Adrenal gland (tissue), 19 donors: ENCODE measurements at regions of chr1 and their contacts with region 1.

Region 1: DNA sequence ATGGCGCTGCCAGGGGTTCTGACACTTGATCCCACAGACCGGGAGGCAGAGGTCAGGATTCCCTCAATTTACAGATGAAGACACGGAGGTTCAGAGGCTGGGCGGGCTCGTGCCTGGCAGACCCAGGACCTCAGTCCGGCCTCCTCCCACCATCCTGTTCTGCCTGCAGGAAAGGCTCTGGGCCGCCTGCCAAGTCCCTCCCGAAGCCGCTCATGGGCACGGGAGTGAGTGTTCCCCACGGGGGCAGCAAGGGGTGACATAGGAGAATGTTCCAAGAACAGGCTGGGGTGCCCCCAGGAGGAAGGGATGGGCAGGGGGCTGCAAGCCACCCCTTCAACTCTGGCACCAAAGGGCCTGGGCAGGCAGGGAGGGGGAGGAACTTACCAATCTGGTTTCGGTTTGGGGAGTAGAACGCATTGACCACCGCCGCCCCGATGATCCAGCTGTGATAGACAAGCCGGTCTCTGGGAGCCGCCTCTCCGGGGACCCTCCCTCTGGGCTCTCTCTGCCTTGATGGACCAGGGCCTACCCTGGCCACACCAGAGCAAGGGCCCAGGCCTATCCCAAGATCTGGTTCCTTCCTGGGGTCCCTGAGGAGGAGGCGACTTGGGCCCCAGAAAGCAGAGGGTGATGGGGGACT is 7.5 kb downstream of the PRXL2B start:
- DNase-seq: peak; percentile 14 to 77 (median 70)
- H3K4me3 ChIP-seq: peak overlapping the region in 1 of 4 donors; percentile 31
- H3K27ac ChIP-seq: no peak overlapping the region
- H3K4me1 ChIP-seq: peaks cover 5 to 13% of the 10 kb centered on the region in 2 donors
- H3K27me3 ChIP-seq: no peaks in the 10 kb centered on the region
- CTCF ChIP-seq: no peak
- POLR2A ChIP-seq: no peak

Region 2: GRCh38 chr1:2636733-2637132 is 42.6 kb after region 1 on chr1:
- intact Hi-C with region 1: loop called in 1 of 2 experiments (anchors 5 kb)
- DNase-seq: peak in 1 of 7 donors; percentile 52
- H3K4me3 ChIP-seq: no peak overlapping the region
- H3K27ac ChIP-seq: no peak overlapping the region
- H3K4me1 ChIP-seq: peaks cover 10 to 12% of the 10 kb centered on the region in 2 donors
- H3K27me3 ChIP-seq: peaks cover 3% of the 10 kb centered on the region
- CTCF ChIP-seq: no peak
- POLR2A ChIP-seq: no peak